ENCODE measurements at regions of chr9 and their contacts with region 1.

Region 1: DNA sequence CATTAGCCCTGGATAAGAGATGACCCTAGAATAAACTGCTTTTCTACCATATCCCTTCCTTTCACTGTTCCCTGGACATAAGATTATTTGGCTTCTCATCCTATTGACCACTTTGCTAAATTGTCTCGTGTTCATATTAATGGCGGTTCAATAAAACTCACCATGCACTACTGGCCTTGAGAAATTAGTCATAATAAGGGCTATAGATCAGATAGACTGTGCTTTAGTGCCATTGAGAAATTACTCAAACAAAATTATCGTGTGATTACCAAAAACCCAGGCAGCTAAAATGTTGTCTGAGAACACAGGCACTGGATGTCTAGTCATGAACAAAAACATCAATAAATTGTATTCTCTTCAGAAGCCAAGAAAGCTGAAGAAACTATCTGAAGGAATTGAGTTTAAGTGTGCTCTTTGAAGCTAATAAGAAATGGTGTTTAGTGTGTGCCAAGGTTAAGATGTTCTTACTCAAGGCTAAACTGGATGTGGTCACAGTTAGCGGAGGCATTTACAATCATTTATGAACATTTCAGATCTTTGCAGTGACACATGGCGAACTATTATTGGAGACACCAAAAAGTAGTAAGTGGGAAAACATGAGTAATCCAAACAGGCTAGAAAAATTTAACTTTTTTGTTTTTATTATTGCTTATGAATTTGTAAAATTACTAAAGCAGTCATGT is 460.4 kb upstream of the RORB start:
- DNase-seq: no peak
- ATAC-seq: no peak
- H3K4me3 ChIP-seq: no peak overlapping the region
- H3K27ac ChIP-seq: no peak overlapping the region
- H3K4me1 ChIP-seq: no peaks in the 10 kb centered on the region
- H3K27me3 ChIP-seq: no peaks in the 10 kb centered on the region
- CTCF ChIP-seq: no peak
- POLR2A ChIP-seq: no peak

Region 2: GRCh38 chr9:74095925-74096324 is 59.2 kb after region 1 on chr9:
- in situ Hi-C with region 1: loop called in 1 of 4 experiments (anchors 10 kb)
- intact Hi-C with region 1: no loop called
- DNase-seq: no peak
- ATAC-seq: no peak
- H3K4me3 ChIP-seq: no peak overlapping the region
- H3K27ac ChIP-seq: no peak overlapping the region
- H3K4me1 ChIP-seq: no peaks in the 10 kb centered on the region
- H3K27me3 ChIP-seq: no peaks in the 10 kb centered on the region
- CTCF ChIP-seq: no peak
- POLR2A ChIP-seq: no peak